CD8-positive, alpha-beta T cell (primary cell): ENCODE measurements at regions of chr9 and their contacts with region 1.

Region 1: DNA sequence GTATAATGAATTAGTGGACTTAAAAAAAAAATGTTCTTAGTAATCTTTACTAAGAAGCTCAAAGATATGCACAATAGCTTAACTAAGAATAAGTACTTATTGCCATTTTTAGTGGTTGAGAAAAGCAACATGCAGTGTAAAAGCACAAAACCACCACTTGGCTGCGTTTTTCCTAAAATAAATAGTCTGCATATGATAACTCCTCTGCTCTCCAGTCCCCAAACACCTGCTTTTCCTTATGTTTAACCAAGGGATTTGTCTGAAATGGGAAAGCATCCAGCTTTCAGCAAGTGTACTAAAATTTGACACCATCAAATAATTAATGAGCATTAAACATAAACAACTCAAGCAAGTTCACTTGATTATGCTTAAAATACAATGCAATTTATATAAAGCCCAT is 41.4 kb downstream of the PSIP1 start:
- DNase-seq: no peak
- ATAC-seq: no peak
- H3K4me3 ChIP-seq: no peak overlapping the region
- H3K4me3 Mint-ChIP-seq: no peak overlapping the region
- H3K27ac ChIP-seq: no peak overlapping the region
- H3K27ac Mint-ChIP-seq: peak overlapping the region; percentile 28
- H3K4me1 ChIP-seq: no peaks in the 10 kb centered on the region
- H3K4me1 Mint-ChIP-seq: peaks cover 14% of the 10 kb centered on the region
- H3K27me3 ChIP-seq: no peaks in the 10 kb centered on the region
- H3K27me3 Mint-ChIP-seq: no peaks in the 10 kb centered on the region
- CTCF ChIP-seq: no peak

Region 2: DNA sequence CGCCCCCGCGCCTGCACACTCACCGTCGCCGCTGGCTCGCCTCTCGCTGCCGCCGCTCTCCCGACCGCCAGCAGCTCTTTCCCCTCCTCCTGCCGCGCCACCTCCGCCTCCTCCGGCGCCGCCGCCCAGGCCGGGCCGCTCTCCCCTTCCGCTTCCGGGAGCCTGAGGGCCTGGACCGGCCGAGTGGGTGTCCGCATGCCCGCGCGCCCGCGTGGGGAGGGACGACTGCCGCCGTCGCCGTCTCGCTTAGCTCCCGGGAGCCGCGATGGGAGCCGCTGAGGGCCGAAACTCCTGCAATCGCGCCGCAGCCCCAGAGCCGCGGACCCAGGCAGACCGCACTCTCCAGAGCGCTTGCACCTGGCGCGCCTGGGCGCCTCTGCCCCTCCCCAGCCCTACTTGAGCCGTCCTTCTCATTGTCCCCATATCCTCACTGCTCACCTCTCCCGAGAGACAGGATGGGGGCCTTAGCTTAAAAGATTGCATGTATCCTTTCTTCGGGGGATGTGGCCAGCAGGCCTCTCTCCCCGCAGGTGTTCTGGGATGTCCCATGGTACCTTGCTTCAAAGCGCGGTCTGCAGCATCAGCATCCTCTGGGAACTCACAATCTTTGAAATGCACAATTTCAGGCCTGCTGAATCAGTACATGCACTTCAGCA is 776.1 kb before region 1 on chr9 and contains the start of gene ZDHHC21:
- CTCF ChIA-PET with region 1: no interaction called
- POLR2A ChIA-PET with region 1: no interaction called
- intact Hi-C with region 1: loop called in 1 of 2 experiments (anchors 10 kb)
- DNase-seq: peak; percentile 1 to 75 (median 52)
- ATAC-seq: peak; percentile 70
- H3K4me3 ChIP-seq: peak within 1 kb of the TSS; percentile 58 to 66
- H3K4me3 Mint-ChIP-seq: peak within 1 kb of the TSS; percentile 93
- H3K27ac ChIP-seq: no peak within 1 kb of the TSS
- H3K27ac Mint-ChIP-seq: peak within 1 kb of the TSS; percentile 78
- H3K4me1 ChIP-seq: peaks cover 13% of the 10 kb centered on the region
- H3K4me1 Mint-ChIP-seq: peaks cover 28% of the 10 kb centered on the region
- H3K27me3 ChIP-seq: no peaks in the 10 kb centered on the region
- H3K27me3 Mint-ChIP-seq: peaks cover 6% of the 10 kb centered on the region
- CTCF ChIP-seq: no peak
- total RNA-seq, gene ZDHHC21: 2.3 to 3.2 TPM

Region 3: GRCh38 chr9:15422372-15423230 is 46.8 kb before region 1 on chr9 and contains the start of gene SNAPC3:
- CTCF ChIA-PET with region 1: no interaction called
- POLR2A ChIA-PET with region 1: no interaction called
- intact Hi-C with region 1: no loop called
- DNase-seq: peak; percentile 85 to 96 (median 92)
- ATAC-seq: peak; percentile 95
- H3K4me3 ChIP-seq: peak within 1 kb of the TSS; percentile 65 to 83
- H3K4me3 Mint-ChIP-seq: peak within 1 kb of the TSS; percentile 91
- H3K27ac ChIP-seq: peak within 1 kb of the TSS; percentile 64 to 67
- H3K27ac Mint-ChIP-seq: peak within 1 kb of the TSS; percentile 87
- H3K4me1 ChIP-seq: peaks cover 22% of the 10 kb centered on the region
- H3K4me1 Mint-ChIP-seq: peaks cover 38% of the 10 kb centered on the region
- H3K27me3 ChIP-seq: no peaks in the 10 kb centered on the region
- H3K27me3 Mint-ChIP-seq: no peaks in the 10 kb centered on the region
- CTCF ChIP-seq: no peak
- total RNA-seq, gene SNAPC3: 3.4 to 5.0 TPM

Region 4: GRCh38 chr9:15453956-15454355 is 15.4 kb before region 1 on chr9:
- CTCF ChIA-PET with region 1: no interaction called
- POLR2A ChIA-PET with region 1: interaction called, 3 read pairs
- intact Hi-C with region 1: loop called in 1 of 2 experiments (anchors 2 kb)
- DNase-seq: no peak
- ATAC-seq: no peak
- H3K4me3 ChIP-seq: no peak overlapping the region
- H3K4me3 Mint-ChIP-seq: no peak overlapping the region
- H3K27ac ChIP-seq: no peak overlapping the region
- H3K27ac Mint-ChIP-seq: no peak overlapping the region
- H3K4me1 ChIP-seq: no peaks in the 10 kb centered on the region
- H3K4me1 Mint-ChIP-seq: no peaks in the 10 kb centered on the region
- H3K27me3 ChIP-seq: no peaks in the 10 kb centered on the region
- H3K27me3 Mint-ChIP-seq: no peaks in the 10 kb centered on the region
- CTCF ChIP-seq: no peak